ENCODE measurements at regions of chr3 and their contacts with region 1.

Region 1: GRCh38 chr3:18424729-18425640 is at the start of gene SATB1:
- DNase-seq: peak; percentile 91
- H3K4me3 Mint-ChIP-seq: peak within 1 kb of the TSS; percentile 83
- H3K27ac Mint-ChIP-seq: peak within 1 kb of the TSS; percentile 98
- H3K4me1 Mint-ChIP-seq: peaks cover 55% of the 10 kb centered on the region
- H3K27me3 Mint-ChIP-seq: peaks cover 2% of the 10 kb centered on the region
- total RNA-seq, gene SATB1: 561 and 571 TPM in 2 replicates

Region 2: GRCh38 chr3:18144571-18144970 is 280.4 kb before region 1 on chr3:
- intact Hi-C with region 1: no loop called
- DNase-seq: no peak
- H3K4me3 Mint-ChIP-seq: no peak overlapping the region
- H3K27ac Mint-ChIP-seq: no peak overlapping the region
- H3K4me1 Mint-ChIP-seq: no peaks in the 10 kb centered on the region
- H3K27me3 Mint-ChIP-seq: no peaks in the 10 kb centered on the region

Region 3: DNA sequence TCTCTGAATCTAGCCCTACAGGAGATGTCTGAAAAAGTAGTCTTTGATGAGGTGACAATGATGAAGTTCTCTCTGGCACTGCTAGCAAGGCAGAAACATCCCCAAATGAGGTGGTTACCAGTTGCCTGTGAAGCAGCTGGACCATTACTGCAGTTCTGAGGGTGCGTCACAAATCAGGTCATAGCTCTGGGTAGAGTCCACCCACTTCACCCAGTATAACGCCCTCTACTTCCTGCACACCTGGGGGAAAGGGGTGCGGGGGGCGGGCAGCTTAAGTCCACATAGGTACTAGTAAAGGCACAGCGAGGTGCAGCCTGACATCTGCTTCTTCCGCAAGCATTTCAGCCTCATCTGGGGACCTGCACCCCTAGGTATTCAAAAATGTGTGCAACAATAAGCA is 13.6 kb after region 1 on chr3:
- intact Hi-C with region 1: loop called (anchors 1 kb)
- DNase-seq: peak; percentile 91
- H3K4me3 Mint-ChIP-seq: peak overlapping the region; percentile 88
- H3K27ac Mint-ChIP-seq: peak overlapping the region; percentile 88
- H3K4me1 Mint-ChIP-seq: peaks cover 27% of the 10 kb centered on the region
- H3K27me3 Mint-ChIP-seq: no peaks in the 10 kb centered on the region

Region 4: DNA sequence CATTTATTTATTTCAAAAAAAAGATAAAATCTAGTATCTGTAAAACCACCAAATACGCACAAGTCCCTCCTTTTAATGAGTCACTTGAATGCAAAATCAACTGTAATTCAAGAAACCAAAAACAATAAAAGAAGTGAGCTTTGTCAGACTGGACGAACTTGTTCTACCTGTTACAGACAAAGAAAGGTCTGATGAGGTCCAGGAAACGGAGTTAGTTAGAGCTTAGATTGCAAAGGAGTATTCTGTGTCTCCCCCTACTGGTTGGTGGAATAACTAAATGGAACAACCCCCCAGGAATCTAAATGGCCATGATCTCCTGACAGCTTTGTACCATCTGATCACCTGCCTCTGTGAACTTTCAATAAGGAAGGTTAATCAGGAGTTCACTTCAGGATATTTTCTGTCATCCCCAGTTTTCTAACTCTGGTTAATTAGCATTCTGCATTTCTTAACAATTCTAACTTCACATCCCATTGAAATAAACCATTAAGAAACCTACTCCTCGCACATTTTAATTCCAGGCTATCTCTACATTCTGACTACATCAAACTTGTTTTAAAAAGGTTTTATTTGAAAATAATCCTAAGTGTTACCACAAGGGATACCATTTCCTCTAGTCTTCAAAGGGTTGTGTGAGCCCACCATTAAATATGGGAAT is 333.2 kb after region 1 on chr3:
- intact Hi-C with region 1: loop called (anchors 1 kb)
- DNase-seq: peak; percentile 88
- H3K4me3 Mint-ChIP-seq: peak overlapping the region; percentile 27
- H3K27ac Mint-ChIP-seq: peak overlapping the region; percentile 74
- H3K4me1 Mint-ChIP-seq: peaks cover 38% of the 10 kb centered on the region
- H3K27me3 Mint-ChIP-seq: no peaks in the 10 kb centered on the region

Measured in activated CD4-positive, alpha-beta T cell treated with anti-CD3 and anti-CD28 coated beads, Interleukin-2, amount 10 ng/mL, durations not matched to agents 24 days and 14 days (primary cell).